ENCODE measurements at regions of chr1 and their contacts with region 1.

Region 1: GRCh38 chr1:234656856-234657654 is 47.1 kb upstream of the IRF2BP2 start:
- DNase-seq: peak in 2 of 4 experiments; percentile 45 to 55
- ATAC-seq: peak; percentile 75
- H3K4me3 ChIP-seq: no peak overlapping the region
- H3K27ac ChIP-seq: peak overlapping the region; percentile 23; the same call in 2 of the 3 replicates
- H3K4me1 ChIP-seq: peaks cover 13 to 16% of the 10 kb centered on the region in 2 experiments
- H3K27me3 ChIP-seq: no peaks in the 10 kb centered on the region
- CTCF ChIP-seq: no peak
- EP300 ChIP-seq: no peak
- POLR2A ChIP-seq: no peak
- RAD21 ChIP-seq: peak in 1 of 2 experiments; percentile 27; a peak in 2 of 4 replicates

Region 2: DNA sequence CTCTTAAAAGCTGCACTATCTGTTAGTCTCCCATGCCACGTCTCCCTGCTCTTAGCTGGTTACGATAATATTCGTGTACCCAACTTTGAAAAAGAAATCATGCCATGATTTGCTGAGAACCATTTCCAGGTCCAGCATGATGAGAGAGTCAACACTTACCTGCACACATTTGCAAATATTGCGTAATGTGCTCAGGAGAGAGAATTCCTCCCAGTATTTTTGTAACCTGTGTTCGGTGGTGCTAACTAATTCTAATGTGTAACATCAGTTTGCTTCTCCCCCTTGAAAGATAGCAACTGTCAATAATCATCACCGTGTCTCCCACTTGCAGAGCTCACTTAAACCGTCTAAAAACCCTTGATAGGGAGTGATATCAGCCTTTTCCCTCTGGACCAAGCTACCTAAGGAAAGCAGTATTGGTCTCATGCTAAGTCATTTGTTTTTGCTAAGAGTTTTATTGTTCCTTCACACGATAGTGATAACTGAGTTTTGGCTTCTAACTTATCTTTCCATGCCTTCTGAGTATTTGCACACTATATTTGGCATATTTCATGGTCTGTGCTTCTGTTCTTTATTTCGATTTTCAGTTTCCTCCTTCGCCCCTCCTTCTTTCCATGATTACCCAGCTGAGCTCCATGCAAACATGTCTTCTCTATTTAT is 14.0 kb after region 1 on chr1:
- CTCF ChIA-PET with region 1: no interaction called
- POLR2A ChIA-PET with region 1: interaction called, 15 read pairs
- in situ Hi-C with region 1: no loop called
- intact Hi-C with region 1: no loop called
- DNase-seq: peak in 2 of 4 experiments; percentile 44 to 58
- ATAC-seq: peak; percentile 52
- H3K4me3 ChIP-seq: no peak overlapping the region
- H3K27ac ChIP-seq: peak overlapping the region; percentile 44; the same call in 2 of the 3 replicates
- H3K4me1 ChIP-seq: peaks cover 6 to 24% of the 10 kb centered on the region in 2 experiments; a peak in 3 of 5 replicates
- H3K27me3 ChIP-seq: no peaks in the 10 kb centered on the region
- CTCF ChIP-seq: no peak
- EP300 ChIP-seq: peak; percentile 57; the same call in 1 of the 2 replicates
- POLR2A ChIP-seq: no peak
- RAD21 ChIP-seq: peak; percentile 27 to 44; a peak in 2 of 4 replicates

Region 3: DNA sequence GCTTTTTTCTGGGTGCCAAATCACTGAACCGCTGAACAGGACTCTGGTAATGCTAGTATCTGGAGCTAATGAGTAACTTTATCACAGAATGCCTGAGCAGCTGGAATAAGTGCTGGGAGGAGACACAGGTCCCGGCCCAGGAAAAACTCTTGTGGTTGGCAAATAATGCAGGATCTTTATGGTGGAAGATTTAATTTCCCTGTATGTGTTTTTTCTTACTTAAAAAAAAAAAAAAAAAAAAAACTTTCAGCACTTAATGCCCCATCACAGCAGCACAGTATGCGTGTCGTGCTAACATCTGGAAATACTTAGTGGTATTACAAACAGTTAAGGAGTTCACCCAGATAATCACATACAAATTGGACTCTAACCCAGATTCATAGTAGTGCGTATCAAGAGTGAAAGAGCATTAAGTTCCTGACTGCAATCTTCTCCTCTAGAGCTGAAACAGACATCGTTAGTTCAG is 250.9 kb after region 1 on chr1:
- CTCF ChIA-PET with region 1: no interaction called
- POLR2A ChIA-PET with region 1: no interaction called
- in situ Hi-C with region 1: no loop called
- intact Hi-C with region 1: no loop called
- DNase-seq: no peak
- ATAC-seq: no peak
- H3K4me3 ChIP-seq: no peak overlapping the region
- H3K27ac ChIP-seq: no peak overlapping the region
- H3K4me1 ChIP-seq: no peaks in the 10 kb centered on the region; a peak in 1 of 5 replicates
- H3K27me3 ChIP-seq: no peaks in the 10 kb centered on the region
- CTCF ChIP-seq: no peak
- EP300 ChIP-seq: no peak
- POLR2A ChIP-seq: no peak
- RAD21 ChIP-seq: no peak

Measured in K562 (cell line).